Ovary (tissue), 10 donors: ENCODE measurements at regions of chr5 and their contacts with region 1.

Region 1: GRCh38 chr5:139293504-139294373 is at the start of gene MATR3:
- DNase-seq: peak; percentile 96 to 98 (median 97)
- H3K4me3 ChIP-seq: peak within 1 kb of the TSS; percentile 95
- H3K27ac ChIP-seq: peak within 1 kb of the TSS; percentile 95 to 100
- H3K4me1 ChIP-seq: peaks cover 10% of the 10 kb centered on the region
- H3K27me3 ChIP-seq: no peaks in the 10 kb centered on the region
- CTCF ChIP-seq: peak in 2 of 3 donors; percentile 6 to 40
- EP300 ChIP-seq: peak; percentile 51
- POLR2A ChIP-seq: peak; percentile 98
- total RNA-seq, gene MATR3: 184 to 297 (median 227) TPM

Region 2: GRCh38 chr5:139256820-139257219 is 36.9 kb before region 1 on chr5:
- intact Hi-C with region 1: no loop called
- DNase-seq: no peak
- H3K4me3 ChIP-seq: no peak overlapping the region
- H3K27ac ChIP-seq: no peak overlapping the region
- H3K4me1 ChIP-seq: no peaks in the 10 kb centered on the region
- H3K27me3 ChIP-seq: no peaks in the 10 kb centered on the region
- CTCF ChIP-seq: no peak
- EP300 ChIP-seq: no peak
- POLR2A ChIP-seq: no peak

Region 3: GRCh38 chr5:139341650-139342422 is 48.1 kb after region 1 on chr5 and contains the start of gene PAIP2:
- intact Hi-C with region 1: loop called in 2 of 4 experiments (anchors 5 kb)
- DNase-seq: peak; percentile 98 to 99 (median 98)
- H3K4me3 ChIP-seq: peak within 1 kb of the TSS; percentile 96
- H3K27ac ChIP-seq: peak within 1 kb of the TSS; percentile 82 to 97
- H3K4me1 ChIP-seq: peaks cover 9% of the 10 kb centered on the region
- H3K27me3 ChIP-seq: no peaks in the 10 kb centered on the region
- CTCF ChIP-seq: peak; percentile 59 to 87 (median 82)
- EP300 ChIP-seq: peak; percentile 42
- POLR2A ChIP-seq: peak; percentile 98
- total RNA-seq, gene PAIP2: 68.4 to 113 (median 100) TPM

Region 4: DNA sequence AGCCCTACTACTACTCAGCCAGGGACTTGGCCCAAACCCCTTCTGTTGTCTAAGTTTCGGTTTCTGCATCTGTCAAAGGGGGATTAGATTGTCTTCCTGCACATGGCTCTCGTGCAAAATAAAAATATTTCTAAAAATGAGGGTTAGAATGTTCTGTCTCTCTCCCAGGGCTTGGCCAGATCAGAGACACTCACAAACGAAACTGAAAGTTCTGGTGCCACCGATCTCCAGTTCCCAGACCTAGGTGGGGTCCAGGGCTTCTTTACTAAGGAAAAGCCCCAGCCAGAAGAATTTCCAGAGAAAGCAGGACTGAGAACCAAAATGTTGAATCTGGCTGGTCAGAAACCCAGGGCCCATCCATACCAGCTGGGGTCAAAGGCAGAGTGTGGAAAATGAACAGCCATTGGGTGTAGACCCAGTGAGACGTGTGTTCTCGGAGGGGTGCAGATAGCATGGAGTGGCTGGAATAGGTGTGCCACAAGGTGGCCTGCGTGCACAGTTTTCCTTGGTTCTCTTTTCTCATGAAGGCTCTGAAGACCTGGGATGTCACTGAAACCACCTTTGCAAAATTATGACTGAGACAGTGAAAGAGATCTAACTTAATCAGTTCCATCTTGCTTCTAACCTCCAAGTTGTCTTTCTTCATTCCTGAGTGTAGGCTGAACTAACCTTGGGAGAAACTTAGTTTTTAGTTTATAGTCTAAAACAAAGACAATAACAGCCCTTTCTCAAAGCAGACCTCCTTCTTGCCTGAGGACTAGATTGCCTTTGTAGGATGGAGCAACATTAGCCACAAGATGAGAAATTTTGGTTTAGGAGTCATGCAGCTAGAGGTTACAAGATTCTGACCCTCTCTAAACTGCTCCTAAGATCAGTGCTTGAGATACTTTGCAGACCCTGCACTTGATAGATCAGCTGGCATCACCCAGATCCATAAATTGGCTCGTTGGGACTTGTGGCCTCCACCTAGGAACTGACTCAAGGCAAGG is 91.6 kb after region 1 on chr5:
- intact Hi-C with region 1: no loop called
- DNase-seq: peak in 1 of 5 donors; percentile 20
- H3K4me3 ChIP-seq: no peak overlapping the region
- H3K27ac ChIP-seq: peak overlapping the region in 1 of 2 donors; percentile 57
- H3K4me1 ChIP-seq: no peaks in the 10 kb centered on the region
- H3K27me3 ChIP-seq: no peaks in the 10 kb centered on the region
- CTCF ChIP-seq: no peak
- EP300 ChIP-seq: no peak
- POLR2A ChIP-seq: no peak

Region 5: DNA sequence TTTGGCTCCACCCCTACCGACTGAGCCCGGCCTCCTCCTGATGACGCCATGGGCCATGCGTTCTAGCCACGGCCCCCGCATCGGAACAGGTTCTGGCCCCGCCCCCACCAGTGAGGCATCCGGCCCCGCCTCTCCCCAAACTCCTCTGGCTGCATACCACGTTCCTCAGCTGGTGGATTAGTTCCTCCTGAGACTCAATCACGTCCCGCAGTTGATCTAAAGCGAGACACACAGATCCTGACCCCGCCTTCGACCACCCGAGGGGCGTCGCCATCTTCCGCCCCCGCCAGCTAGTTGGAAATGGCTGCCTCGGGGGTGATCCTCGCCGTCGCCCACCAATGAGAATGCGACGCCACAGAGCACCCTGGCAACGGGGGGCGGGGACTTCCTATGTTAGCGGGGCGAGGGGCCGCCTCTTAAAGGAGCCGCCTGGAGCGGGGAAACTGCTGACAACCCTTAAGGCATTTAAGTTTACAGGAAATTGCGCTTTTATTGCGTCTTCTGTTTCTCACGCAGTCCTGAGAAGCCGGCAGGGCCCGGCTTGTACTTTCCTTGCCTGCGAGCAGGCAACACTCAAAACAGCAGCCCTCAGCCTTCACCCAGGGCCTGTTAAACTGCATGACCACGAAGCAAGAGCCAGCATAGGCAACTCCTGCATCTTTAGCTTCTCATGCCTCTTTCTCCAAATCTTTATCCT is 110.2 kb after region 1 on chr5 and contains the start of gene SPATA24:
- intact Hi-C with region 1: no loop called
- DNase-seq: peak; percentile 96 to 98 (median 97)
- H3K4me3 ChIP-seq: peak within 1 kb of the TSS; percentile 52
- H3K27ac ChIP-seq: peak within 1 kb of the TSS; percentile 54 to 94
- H3K4me1 ChIP-seq: no peaks in the 10 kb centered on the region
- H3K27me3 ChIP-seq: no peaks in the 10 kb centered on the region
- CTCF ChIP-seq: no peak
- EP300 ChIP-seq: peak; percentile 48
- POLR2A ChIP-seq: peak; percentile 43
- total RNA-seq, gene SPATA24: 2.1 to 4.7 (median 3.3) TPM

Region 6: GRCh38 chr5:139837631-139838422 is 544.1 kb after region 1 on chr5:
- intact Hi-C with region 1: no loop called
- DNase-seq: peak in 2 of 5 donors; percentile 9 to 28
- H3K4me3 ChIP-seq: no peak overlapping the region
- H3K27ac ChIP-seq: no peak overlapping the region
- H3K4me1 ChIP-seq: no peaks in the 10 kb centered on the region
- H3K27me3 ChIP-seq: no peaks in the 10 kb centered on the region
- CTCF ChIP-seq: no peak
- EP300 ChIP-seq: no peak
- POLR2A ChIP-seq: no peak